GM10248 (cell line): ENCODE measurements at regions of chr3 and their contacts with region 1.

Region 1: DNA sequence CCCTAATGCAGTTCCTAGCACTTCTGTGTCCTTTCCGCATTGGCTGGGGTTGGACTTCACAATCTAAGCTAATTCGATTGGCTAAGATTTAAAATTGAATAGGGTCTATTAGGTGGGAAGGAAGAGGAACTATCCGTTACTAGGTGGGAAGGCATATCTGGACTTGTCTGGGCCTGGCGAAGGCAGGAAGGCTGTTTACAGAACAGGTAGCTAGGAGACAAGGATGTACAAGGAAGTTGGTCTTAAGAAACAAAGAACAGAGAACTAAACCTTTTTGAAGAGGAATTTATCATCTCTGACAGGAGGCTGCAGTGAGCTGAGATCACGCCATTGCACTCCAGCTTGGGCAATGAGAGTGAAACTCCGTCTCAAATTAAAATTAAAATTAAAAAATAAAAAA is 17.3 kb upstream of the ATG7 start:
- DNase-seq: no peak
- CTCF ChIP-seq: no peak

Region 2: GRCh38 chr3:11244126-11244677 is 10.7 kb before region 1 on chr3:
- CTCF ChIA-PET with region 1: interaction called, 11 read pairs
- POLR2A ChIA-PET with region 1: no interaction called
- DNase-seq: no peak
- CTCF ChIP-seq: no peak

Region 3: DNA sequence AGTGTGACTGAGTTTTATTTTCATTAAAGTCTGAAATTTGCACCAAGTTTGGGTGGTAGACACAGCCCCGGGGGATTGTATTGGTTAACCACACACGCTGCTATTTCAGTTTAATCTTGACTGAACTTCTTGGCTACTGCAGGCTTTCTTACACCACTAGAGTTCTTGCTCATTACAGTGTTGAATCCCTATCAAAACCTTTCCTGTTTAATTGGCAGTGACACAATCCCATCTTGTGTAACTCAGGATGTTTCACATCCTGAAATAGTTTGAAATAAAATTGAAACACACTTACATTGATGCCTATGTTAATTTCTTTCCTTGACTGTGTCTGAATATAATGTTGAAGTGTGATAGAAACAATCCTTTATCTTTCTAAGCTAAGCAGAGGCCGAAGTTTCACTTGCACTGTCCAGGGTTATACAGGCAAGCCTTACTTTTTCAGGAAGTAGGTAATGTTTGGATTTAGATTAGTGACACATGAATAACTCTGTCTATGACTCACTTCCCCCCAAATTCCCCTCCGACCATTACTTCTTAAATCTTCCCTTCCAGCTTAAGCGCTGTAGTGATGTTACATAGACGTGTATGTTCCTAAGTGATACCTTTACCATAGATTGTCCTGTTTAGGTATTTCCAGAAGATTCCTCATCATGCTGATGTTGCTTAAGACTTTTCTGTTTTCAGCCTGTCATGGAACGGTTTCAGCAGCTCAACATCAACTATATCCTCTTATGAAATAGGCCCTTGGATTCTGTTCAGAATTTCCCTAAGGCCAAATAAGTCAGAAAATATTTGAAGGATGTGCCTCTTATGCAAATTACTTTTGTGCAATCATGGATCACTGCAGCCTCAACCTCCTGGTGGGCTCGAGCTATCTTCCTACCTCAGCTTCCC is 34.2 kb after region 1 on chr3:
- CTCF ChIA-PET with region 1: no interaction called
- POLR2A ChIA-PET with region 1: interaction called, 10 read pairs
- DNase-seq: peak; percentile 44
- CTCF ChIP-seq: no peak

Region 4: GRCh38 chr3:11306817-11307589 is 52.1 kb after region 1 on chr3:
- CTCF ChIA-PET with region 1: no interaction called
- POLR2A ChIA-PET with region 1: no interaction called
- DNase-seq: no peak
- CTCF ChIP-seq: no peak

Region 5: DNA sequence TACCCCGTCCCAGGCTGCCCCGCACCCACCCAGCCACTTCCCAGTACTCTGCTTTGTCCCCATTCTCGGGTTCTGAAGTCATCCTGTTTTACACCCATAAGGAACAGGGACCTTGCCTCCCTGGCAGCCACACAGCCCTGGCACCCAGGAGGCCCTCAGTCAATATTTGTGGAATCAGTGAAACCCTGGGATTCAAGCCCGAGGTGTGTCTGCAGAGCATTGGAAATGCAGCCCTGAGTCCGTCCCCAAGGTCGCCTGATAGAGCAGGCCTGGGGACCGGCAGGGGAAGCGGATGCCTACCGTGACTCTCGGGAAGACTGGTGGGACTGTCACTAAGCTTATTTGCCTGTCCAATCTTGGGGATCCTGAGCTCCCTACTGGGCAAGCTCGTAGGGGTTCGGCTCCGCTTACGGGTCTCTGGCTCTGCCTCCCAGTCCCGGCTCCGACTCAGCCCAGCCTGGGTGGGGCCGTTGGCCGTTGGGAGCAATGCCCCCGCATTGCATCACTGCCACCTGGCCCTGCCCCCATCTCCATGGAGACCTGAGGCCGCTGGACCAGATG is 656.2 kb after region 1 on chr3:
- CTCF ChIA-PET with region 1: no interaction called
- POLR2A ChIA-PET with region 1: no interaction called
- DNase-seq: no peak
- CTCF ChIP-seq: no peak